ENCODE measurements at regions of chr14 and their contacts with region 1.

Region 1: GRCh38 chr14:105490572-105491366 is at the start of gene TEDC1:
- DNase-seq: peak; percentile 100
- H3K4me3 ChIP-seq: peak within 1 kb of the TSS; percentile 77 to 90
- H3K27ac ChIP-seq: peak within 1 kb of the TSS; percentile 89 to 99
- H3K4me1 ChIP-seq: peaks cover 19 to 37% of the 10 kb centered on the region in 2 donors
- H3K27me3 ChIP-seq: no peaks in the 10 kb centered on the region
- CTCF ChIP-seq: peak; percentile 46 to 99 (median 57)
- total RNA-seq, gene TEDC1: 12.7 TPM

Region 2: GRCh38 chr14:104932676-104933631 is 557.8 kb before region 1 on chr14:
- intact Hi-C with region 1: no loop called
- DNase-seq: peak; percentile 27 to 94
- H3K4me3 ChIP-seq: peak overlapping the region; percentile 45 to 70
- H3K27ac ChIP-seq: peak overlapping the region; percentile 37 to 62
- H3K4me1 ChIP-seq: peaks cover 0 to 7% of the 10 kb centered on the region in 2 donors
- H3K27me3 ChIP-seq: no peaks in the 10 kb centered on the region
- CTCF ChIP-seq: peak; percentile 72 to 90 (median 74)

Region 3: GRCh38 chr14:105369653-105370040 is 121.1 kb before region 1 on chr14:
- intact Hi-C with region 1: loop called (anchors 1 kb)
- DNase-seq: no peak
- H3K4me3 ChIP-seq: no peak overlapping the region
- H3K27ac ChIP-seq: no peak overlapping the region
- H3K4me1 ChIP-seq: no peaks in the 10 kb centered on the region
- H3K27me3 ChIP-seq: no peaks in the 10 kb centered on the region
- CTCF ChIP-seq: no peak

Region 4: DNA sequence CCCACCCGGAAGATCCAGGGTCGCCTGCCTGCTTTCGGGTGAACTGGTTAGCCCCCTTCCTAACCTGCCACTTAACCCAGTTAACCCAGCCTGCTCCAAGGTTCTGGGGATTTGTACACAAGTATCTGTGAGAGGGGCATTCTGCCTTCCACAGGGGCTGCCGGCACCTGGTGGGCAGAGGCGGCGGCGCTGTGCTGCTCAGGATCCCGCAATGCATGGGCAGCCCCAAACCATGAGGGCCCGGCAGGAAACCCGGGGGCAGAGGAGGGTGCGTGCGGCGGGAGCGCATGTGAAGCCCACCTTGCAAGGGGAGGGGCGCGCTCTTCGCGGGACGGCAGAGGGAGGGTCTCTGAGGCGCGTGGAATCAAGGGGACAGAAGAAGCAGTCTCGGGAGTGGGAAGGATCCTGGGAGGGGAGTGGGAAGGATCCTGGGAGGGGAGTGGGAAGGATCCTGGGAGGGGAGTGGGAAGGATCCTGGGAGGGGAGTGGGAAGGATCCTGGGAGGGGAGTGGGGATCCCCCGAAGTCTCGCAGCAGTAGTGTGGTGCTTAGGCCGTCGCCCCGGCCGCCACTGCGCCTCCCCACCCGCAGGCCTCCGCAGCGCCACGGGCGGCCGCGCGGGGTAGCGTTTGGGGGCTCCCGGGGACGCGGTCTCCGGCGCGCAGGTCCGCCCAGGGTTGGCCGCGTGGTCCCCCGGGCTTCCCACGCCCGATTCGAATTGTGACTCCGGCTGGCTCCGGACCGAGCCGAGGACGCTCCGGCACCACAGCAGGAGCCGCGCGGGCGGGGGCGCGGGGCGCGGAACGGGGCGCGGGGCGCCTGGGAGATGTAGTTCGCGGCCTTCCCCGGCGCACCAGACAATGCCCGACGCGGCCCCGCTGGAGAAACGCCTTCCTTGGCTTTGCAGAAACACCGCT is 76.1 kb before region 1 on chr14:
- intact Hi-C with region 1: loop called (anchors 2 kb)
- DNase-seq: peak; percentile 27 to 85
- H3K4me3 ChIP-seq: peak overlapping the region; percentile 55 to 71
- H3K27ac ChIP-seq: peak overlapping the region; percentile 36 to 62
- H3K4me1 ChIP-seq: peaks cover 0 to 18% of the 10 kb centered on the region in 2 donors
- H3K27me3 ChIP-seq: no peaks in the 10 kb centered on the region
- CTCF ChIP-seq: peak; percentile 49 to 80 (median 69)

Region 5: DNA sequence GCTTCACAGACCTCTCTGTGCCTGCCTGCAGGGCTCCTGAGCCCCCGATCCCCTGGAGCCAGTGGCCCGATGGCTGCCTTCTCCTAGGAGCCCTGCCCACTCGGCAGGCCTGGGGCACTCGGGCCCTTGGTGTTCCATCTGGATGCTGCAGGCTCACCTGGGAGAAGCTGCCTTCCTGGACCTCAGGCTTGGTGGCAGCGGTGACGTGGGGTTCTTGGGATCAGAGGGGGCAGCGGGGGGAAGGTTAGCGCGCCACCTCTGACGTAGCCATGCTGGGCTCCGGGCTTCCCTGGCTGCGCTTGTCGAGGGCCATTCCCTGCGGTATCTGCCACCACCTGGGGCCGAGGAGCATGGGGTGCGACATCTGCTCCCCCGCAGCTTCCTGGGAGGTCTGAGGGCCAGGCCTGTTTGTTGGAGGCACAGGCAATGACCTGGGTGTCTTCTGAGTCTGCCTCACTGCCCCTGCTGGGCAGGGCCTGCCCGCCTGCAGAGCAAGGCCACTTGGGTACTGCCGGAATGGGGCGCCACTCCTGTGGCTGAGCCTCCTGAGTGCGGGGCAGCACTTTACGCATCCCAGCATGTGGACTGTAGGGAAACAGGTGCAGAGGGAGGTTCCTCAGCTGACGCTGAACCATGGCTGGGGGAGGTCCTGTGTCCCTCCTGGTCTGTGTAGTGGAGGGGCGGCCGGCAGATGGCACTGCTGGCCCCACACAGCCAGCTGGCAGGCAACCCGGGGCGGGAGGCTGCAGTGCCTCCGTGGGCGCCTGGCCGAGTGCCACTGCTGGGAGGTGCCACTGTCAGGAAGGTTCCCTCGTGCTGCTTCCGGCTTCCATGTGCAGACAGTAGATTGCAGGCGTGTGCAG is 50.8 kb before region 1 on chr14:
- intact Hi-C with region 1: no loop called
- DNase-seq: no peak
- H3K4me3 ChIP-seq: no peak overlapping the region
- H3K27ac ChIP-seq: no peak overlapping the region
- H3K4me1 ChIP-seq: peaks cover 0 to 2% of the 10 kb centered on the region in 2 donors
- H3K27me3 ChIP-seq: no peaks in the 10 kb centered on the region
- CTCF ChIP-seq: no peak

Region 6: DNA sequence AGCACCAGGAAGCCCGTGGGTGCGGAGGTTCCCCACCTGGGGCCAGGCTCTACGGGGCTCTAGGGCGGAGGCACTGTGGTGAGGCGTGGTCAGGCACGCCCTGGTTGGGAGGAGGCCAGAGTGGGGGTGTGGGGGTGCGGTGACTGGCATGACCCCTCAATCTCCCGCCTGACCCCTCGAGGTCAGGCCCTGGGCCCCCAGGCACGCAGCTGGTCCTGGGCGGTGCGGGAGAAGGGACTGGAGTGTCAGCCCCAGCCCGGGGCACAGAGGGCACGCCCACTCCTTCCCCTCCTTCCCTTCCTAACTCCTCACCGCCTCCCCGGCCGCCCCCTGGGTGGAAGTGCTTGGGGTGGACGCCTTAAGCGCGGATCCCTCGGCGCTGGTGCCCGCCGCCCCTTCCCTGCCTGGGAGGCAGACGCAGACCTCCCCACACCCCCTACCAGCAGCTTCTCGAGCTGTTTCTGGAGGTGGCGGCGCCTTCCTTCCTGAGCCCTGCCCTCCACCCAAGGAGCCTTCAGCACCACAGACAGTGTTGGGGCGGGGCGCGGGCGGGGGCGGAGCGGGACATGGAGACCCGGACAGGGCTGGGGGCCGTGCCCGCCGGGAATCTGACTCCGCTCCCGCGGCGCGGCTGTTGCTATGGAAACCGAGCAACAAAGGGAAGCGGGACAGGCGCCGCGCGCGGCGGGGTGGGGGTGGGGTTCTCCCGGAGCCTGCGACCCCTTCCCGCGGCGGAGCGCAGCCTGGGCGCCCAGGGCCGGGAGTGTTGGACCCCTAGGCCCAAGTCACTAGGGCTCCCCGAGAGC is 16.9 kb before region 1 on chr14:
- intact Hi-C with region 1: loop called (anchors 2 kb)
- DNase-seq: peak; percentile 87 to 98
- H3K4me3 ChIP-seq: peak overlapping the region; percentile 65 to 78
- H3K27ac ChIP-seq: peak overlapping the region; percentile 86 to 96
- H3K4me1 ChIP-seq: peaks cover 21 to 45% of the 10 kb centered on the region in 2 donors
- H3K27me3 ChIP-seq: no peaks in the 10 kb centered on the region
- CTCF ChIP-seq: no peak

Region 7: GRCh38 chr14:105709281-105710118 is 218.7 kb after region 1 on chr14:
- intact Hi-C with region 1: no loop called
- DNase-seq: no peak
- H3K4me3 ChIP-seq: no peak overlapping the region
- H3K27ac ChIP-seq: no peak overlapping the region
- H3K4me1 ChIP-seq: no peaks in the 10 kb centered on the region
- H3K27me3 ChIP-seq: no peaks in the 10 kb centered on the region
- CTCF ChIP-seq: no peak